Sciatic nerve (tissue), 2 donors: ENCODE measurements at regions of chrX and their contacts with region 1.

Region 1: DNA sequence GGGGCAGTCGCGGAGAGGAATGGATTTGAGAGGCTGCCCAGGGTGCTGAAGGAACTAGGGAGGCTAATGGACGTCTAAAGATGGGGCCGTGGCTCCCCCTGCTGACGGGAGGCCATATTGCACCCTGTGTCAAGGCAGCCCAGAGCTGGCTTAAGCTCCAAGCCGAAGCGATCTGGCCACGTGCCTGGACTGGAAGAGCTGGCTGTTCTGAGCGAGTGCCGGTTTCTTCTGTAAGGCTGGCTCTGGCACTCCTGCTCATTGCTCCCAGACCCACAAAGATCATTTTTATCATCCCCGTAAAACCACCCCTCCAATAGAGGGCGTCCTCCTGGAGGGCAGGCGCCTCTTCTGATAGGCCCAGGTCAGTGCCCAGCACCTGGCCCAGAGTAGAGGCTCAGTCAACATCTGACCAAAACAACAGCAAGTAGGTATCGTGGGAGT is 5.6 kb downstream of the PNCK start:
- DNase-seq: peak; percentile 90
- ATAC-seq: peak; percentile 83

Region 2: DNA sequence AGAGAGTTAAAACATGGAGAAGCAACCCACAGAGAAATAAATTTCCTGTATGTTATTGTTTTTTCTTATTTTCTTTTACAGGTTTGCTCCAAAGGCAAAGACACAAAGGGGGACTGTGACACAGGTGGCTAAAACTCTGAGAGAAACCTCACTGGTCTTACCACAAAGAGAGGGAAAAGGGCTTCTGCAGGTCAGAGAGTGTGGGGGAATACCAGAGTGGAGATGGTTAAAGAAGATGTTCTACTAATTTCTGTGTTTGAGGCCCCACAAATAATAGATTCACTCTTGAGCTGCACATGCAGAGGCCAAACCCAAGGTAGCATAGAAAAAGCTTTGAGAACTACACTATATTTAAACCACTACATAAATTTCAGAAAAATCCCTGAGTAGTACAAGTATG is 1368.2 kb before region 1 on chrX:
- intact Hi-C with region 1: no loop called
- DNase-seq: no peak
- ATAC-seq: no peak

Region 3: GRCh38 chrX:153476647-153477362 is 191.2 kb before region 1 on chrX:
- intact Hi-C with region 1: no loop called
- DNase-seq: no peak
- ATAC-seq: peak; percentile 57

Region 4: GRCh38 chrX:153539171-153539978 is 128.6 kb before region 1 on chrX:
- intact Hi-C with region 1: loop called (anchors 5 kb)
- DNase-seq: peak; percentile 81
- ATAC-seq: peak; percentile 80

Region 5: GRCh38 chrX:153763989-153764755 is 96.2 kb after region 1 on chrX and contains the start of gene PLXNB3:
- intact Hi-C with region 1: no loop called
- DNase-seq: peak; percentile 90
- ATAC-seq: peak; percentile 76
- total RNA-seq, gene PLXNB3: 73.1 TPM